ENCODE measurements at regions of chr10 and their contacts with region 1.

Region 1: GRCh38 chr10:9331583-9332008 is 1277.1 kb downstream of the GATA3 start:
- DNase-seq: peak; percentile 21
- ATAC-seq: peak; percentile 50
- H3K4me3 ChIP-seq: no peak overlapping the region
- H3K27ac ChIP-seq: no peak overlapping the region
- H3K4me1 ChIP-seq: no peaks in the 10 kb centered on the region
- H3K27me3 ChIP-seq: no peaks in the 10 kb centered on the region; a peak in 1 of 5 replicates
- CTCF ChIP-seq: peak; percentile 60
- EP300 ChIP-seq: no peak
- POLR2A ChIP-seq: no peak
- RAD21 ChIP-seq: no peak

Region 2: GRCh38 chr10:9188147-9188949 is 143.2 kb before region 1 on chr10:
- CTCF ChIA-PET with region 1: no interaction called
- POLR2A ChIA-PET with region 1: no interaction called
- in situ Hi-C with region 1: no loop called
- intact Hi-C with region 1: no loop called
- DNase-seq: no peak
- ATAC-seq: no peak
- H3K4me3 ChIP-seq: no peak overlapping the region
- H3K27ac ChIP-seq: no peak overlapping the region
- H3K4me1 ChIP-seq: no peaks in the 10 kb centered on the region
- H3K27me3 ChIP-seq: no peaks in the 10 kb centered on the region
- CTCF ChIP-seq: no peak
- EP300 ChIP-seq: no peak
- POLR2A ChIP-seq: no peak
- RAD21 ChIP-seq: no peak

Region 3: DNA sequence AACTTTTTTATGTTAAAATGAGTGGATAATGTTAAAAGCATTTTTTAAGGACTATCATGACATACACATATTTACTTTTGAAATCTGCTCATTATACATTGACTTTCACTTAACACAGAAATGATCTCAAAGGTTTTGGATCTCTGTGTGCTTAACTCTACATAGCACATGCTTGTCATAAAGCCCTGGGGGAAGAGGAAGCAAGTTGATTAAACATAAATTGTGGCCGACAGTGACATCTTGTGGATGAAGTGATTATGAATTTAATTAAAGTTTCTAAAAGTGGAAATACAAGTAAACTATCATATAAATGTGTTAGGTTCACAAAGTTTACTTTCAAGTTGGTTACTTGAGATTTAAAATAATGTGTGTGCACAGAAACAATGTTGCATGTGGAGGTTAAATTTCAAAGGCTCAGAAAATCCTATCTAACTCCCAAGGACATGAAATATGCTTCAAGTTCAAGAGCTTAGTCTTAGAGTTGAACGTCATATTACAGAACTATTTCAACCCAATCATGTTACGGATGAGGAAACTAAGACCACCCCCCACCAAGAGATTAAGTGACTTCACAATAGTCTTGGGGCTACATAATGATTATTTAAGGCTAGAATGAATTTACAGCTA is 29.4 kb before region 1 on chr10:
- CTCF ChIA-PET with region 1: no interaction called
- POLR2A ChIA-PET with region 1: no interaction called
- in situ Hi-C with region 1: no loop called
- intact Hi-C with region 1: no loop called
- DNase-seq: peak; percentile 33
- ATAC-seq: peak; percentile 43; the same call in 2 of the 3 replicates
- H3K4me3 ChIP-seq: no peak overlapping the region
- H3K27ac ChIP-seq: no peak overlapping the region
- H3K4me1 ChIP-seq: no peaks in the 10 kb centered on the region
- H3K27me3 ChIP-seq: no peaks in the 10 kb centered on the region
- CTCF ChIP-seq: peak; percentile 42
- EP300 ChIP-seq: no peak
- POLR2A ChIP-seq: no peak
- RAD21 ChIP-seq: no peak

Region 4: GRCh38 chr10:11036407-11037011 is 1704.9 kb after region 1 on chr10:
- CTCF ChIA-PET with region 1: interaction called, 5 read pairs
- POLR2A ChIA-PET with region 1: no interaction called
- in situ Hi-C with region 1: loop called (anchors 5 kb)
- intact Hi-C with region 1: no loop called
- DNase-seq: peak; percentile 11
- ATAC-seq: peak; percentile 82
- H3K4me3 ChIP-seq: no peak overlapping the region
- H3K27ac ChIP-seq: no peak overlapping the region
- H3K4me1 ChIP-seq: no peaks in the 10 kb centered on the region
- H3K27me3 ChIP-seq: no peaks in the 10 kb centered on the region
- CTCF ChIP-seq: peak; percentile 44; the same call in 1 of the 2 replicates
- EP300 ChIP-seq: no peak
- POLR2A ChIP-seq: no peak
- RAD21 ChIP-seq: no peak

Region 5: DNA sequence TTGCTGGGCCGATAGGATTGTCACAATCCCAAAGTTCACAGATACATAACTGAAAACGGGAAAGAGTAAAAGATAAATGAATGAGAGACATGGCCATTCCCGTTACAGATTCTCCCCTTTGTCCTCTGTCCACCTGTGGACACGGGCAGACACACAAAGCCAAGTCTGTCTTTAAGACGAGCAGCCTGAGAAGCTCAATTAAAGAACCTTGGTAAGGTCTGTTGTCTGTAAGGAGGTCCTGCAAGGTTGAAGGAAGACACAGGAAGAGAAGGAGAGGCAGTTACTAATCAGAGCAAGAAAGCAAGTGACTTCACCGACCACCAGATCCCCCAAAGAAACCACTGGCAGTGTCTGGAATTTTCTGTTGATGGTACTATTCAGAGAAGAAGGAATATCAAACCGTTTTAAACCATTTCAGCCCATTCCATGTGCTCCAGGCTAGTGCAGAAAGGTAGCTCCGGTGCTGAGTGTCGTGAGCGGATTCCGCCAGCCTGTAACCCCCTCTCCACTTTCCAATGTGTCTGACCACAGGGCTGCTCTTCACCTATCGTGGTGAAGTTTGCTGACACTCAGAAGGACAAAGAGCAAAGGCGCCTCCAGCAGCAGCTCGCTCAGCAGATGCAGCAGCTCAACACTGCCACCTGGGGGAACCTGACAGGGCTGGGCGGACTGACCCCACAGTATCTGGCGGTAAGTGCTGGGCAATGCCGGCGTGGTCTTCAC is 1938.7 kb after region 1 on chr10:
- CTCF ChIA-PET with region 1: interaction called, 7 read pairs
- POLR2A ChIA-PET with region 1: no interaction called
- in situ Hi-C with region 1: loop called (anchors 5 kb)
- intact Hi-C with region 1: no loop called
- DNase-seq: peak; percentile 61
- ATAC-seq: peak; percentile 100
- H3K4me3 ChIP-seq: no peak overlapping the region
- H3K27ac ChIP-seq: no peak overlapping the region
- H3K4me1 ChIP-seq: 0 out of 2 replicates have a peak, but pooled peaks cover 5% of the 10 kb centered on the region
- H3K27me3 ChIP-seq: peaks cover 3 to 20% of the 10 kb centered on the region in 2 experiments; a peak in 3 of 5 replicates
- CTCF ChIP-seq: peak; percentile 94
- EP300 ChIP-seq: no peak
- POLR2A ChIP-seq: no peak
- RAD21 ChIP-seq: peak; percentile 78